ENCODE measurements at regions of chrX and their contacts with region 1.

Region 1: DNA sequence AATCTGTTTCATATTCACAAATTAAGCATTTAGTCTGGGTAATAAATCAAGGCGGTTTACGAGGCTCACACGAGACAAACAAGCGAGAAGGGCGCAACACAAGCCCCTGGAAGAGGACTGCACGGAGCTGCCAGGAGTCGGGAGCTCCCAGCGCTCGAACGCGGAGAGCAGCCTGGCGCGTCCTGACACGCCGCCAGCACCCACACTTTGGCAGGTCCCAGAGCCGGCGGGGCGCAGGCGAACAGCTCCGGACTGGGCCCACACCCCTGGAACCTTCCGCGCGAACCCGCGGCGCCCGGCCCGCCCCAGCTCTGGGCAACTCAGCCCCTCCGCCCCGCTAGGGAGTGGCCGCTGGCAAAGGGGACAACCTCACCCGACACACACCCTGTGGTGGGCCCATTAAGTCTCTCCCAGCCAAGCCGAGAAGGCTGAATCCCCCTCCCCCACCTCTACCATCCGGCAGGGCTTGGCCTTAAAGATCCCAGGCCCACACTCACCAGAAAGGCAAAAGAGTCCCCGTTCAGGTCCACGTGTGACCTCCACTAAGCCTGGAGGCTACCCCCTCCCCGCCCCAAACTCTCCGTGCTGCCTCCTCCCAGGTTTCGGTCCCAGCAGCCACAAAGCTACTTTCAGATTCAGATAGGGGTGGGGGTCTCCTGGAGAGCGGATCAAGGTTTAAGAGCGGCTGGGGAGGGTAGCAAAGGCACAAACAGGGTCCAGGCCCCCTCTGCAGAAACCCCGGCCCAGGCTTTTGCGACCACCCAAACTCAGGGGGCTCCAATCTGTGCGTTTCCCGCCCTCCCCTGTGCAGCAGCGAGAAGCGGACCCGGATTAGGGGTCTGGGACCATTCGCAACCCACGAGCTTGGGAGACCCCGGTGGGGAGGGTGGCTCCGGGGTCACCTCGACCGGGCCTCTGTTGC is 47.5 kb upstream of the BCOR start:
- DNase-seq: no peak
- ATAC-seq: no peak
- H3K4me3 ChIP-seq: peak overlapping the region; percentile 39
- H3K4me3 Mint-ChIP-seq: peak overlapping the region in 9 of 10 donors; percentile 60 to 79 (median 70)
- H3K27ac ChIP-seq: no peak overlapping the region
- H3K27ac Mint-ChIP-seq: peak overlapping the region in 2 of 9 donors; percentile 21 to 25
- H3K4me1 ChIP-seq: peaks cover 0 to 11% of the 10 kb centered on the region in 2 donors
- H3K4me1 Mint-ChIP-seq: peaks cover 0 to 15% (median 7%) of the 10 kb centered on the region in 7 donors
- H3K27me3 ChIP-seq: no peaks in the 10 kb centered on the region
- H3K27me3 Mint-ChIP-seq: peaks cover 0 to 9% (median 0%) of the 10 kb centered on the region in 5 donors

Region 2: DNA sequence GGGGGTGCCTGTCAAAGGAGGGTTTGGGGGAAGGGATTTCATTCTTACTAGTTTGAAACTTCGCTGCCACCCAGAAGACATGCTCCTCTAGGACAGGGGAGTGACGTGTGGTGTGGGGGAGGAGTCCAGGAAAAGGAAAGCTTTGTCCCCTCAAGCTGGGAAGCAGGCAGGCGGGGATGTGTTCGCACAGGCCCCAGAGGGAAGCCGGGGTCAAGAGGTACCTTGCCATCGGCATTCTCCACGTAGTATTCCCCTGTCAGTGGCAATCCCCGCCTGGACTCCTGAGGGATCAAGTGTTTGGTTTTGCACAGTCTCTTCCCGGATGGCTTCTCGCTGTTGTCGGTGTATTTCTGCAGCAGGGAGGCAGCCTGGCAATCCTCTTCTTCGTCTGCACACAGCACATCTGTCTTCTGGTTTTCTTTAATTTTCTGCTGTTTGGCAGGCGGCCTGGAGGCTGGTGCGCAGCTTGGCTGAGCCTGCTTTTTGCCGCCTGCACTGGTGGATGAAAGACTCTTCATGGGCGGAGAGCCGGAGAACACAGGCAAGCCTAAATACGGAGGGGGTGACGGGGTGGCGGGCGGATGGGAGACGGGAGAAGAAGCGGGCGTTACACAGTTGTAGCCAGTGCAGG is 82.6 kb before region 1 on chrX:
- CTCF ChIA-PET with region 1: no interaction called
- POLR2A ChIA-PET with region 1: interaction called, 11 read pairs
- intact Hi-C with region 1: no loop called
- DNase-seq: no peak
- ATAC-seq: no peak
- H3K4me3 ChIP-seq: no peak overlapping the region
- H3K4me3 Mint-ChIP-seq: peak overlapping the region in 2 of 10 donors; percentile 25 to 41
- H3K27ac ChIP-seq: no peak overlapping the region
- H3K27ac Mint-ChIP-seq: peak overlapping the region in 7 of 9 donors; percentile 33 to 97 (median 74)
- H3K4me1 ChIP-seq: peaks cover 0 to 37% of the 10 kb centered on the region in 2 donors
- H3K4me1 Mint-ChIP-seq: peaks cover 17 to 59% (median 48%) of the 10 kb centered on the region in 7 donors
- H3K27me3 ChIP-seq: no peaks in the 10 kb centered on the region
- H3K27me3 Mint-ChIP-seq: no peaks in the 10 kb centered on the region

Region 3: GRCh38 chrX:40908857-40909475 is 763.7 kb after region 1 on chrX:
- CTCF ChIA-PET with region 1: no interaction called
- POLR2A ChIA-PET with region 1: no interaction called
- intact Hi-C with region 1: no loop called
- DNase-seq: no peak
- ATAC-seq: no peak
- H3K4me3 ChIP-seq: no peak overlapping the region
- H3K4me3 Mint-ChIP-seq: no peak overlapping the region
- H3K27ac ChIP-seq: no peak overlapping the region
- H3K27ac Mint-ChIP-seq: no peak overlapping the region
- H3K4me1 ChIP-seq: no peaks in the 10 kb centered on the region
- H3K4me1 Mint-ChIP-seq: no peaks in the 10 kb centered on the region
- H3K27me3 ChIP-seq: no peaks in the 10 kb centered on the region
- H3K27me3 Mint-ChIP-seq: no peaks in the 10 kb centered on the region

Measured in naive thymus-derived CD4-positive, alpha-beta T cell (primary cell).